Activated CD4-positive, alpha-beta T cell treated with anti-CD3 and anti-CD28 coated beads, Interleukin-2, amount 10 ng/mL, durations not matched to agents 24 days and 14 days (primary cell): ENCODE measurements at regions of chrX and their contacts with region 1.

Region 1: GRCh38 chrX:136028251-136028984 is 43.2 kb downstream of the SLC9A6 start:
- DNase-seq: peak; percentile 62
- H3K4me3 Mint-ChIP-seq: no peak overlapping the region
- H3K27ac Mint-ChIP-seq: no peak overlapping the region
- H3K4me1 Mint-ChIP-seq: no peaks in the 10 kb centered on the region
- H3K27me3 Mint-ChIP-seq: no peaks in the 10 kb centered on the region

Region 2: GRCh38 chrX:136162831-136163570 is 134.6 kb after region 1 on chrX:
- intact Hi-C with region 1: loop called (anchors 1 kb)
- DNase-seq: peak; percentile 82
- H3K4me3 Mint-ChIP-seq: no peak overlapping the region
- H3K27ac Mint-ChIP-seq: no peak overlapping the region
- H3K4me1 Mint-ChIP-seq: peaks cover 7% of the 10 kb centered on the region
- H3K27me3 Mint-ChIP-seq: no peaks in the 10 kb centered on the region

Region 3: DNA sequence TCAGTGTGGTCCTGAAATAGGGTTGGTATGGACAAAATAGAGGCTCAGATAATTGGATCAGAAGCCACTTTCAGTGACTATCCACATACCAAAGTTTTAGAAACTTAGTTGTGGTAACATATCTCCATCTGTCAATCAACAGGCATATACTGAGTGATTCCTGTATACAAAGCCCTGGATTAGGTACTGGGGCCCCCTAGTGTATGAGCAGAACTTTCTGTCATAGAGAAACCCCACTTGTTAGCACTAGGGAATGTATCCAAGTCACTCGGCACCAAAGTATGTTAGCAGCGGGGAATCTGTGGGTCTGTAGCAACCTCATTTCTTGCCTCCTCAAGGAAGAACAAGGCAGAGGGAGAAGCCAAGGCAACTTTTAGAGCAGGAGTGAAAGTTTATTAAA is 172.0 kb after region 1 on chrX:
- intact Hi-C with region 1: loop called (anchors 5 kb)
- DNase-seq: peak; percentile 69
- H3K4me3 Mint-ChIP-seq: no peak overlapping the region
- H3K27ac Mint-ChIP-seq: no peak overlapping the region
- H3K4me1 Mint-ChIP-seq: peaks cover 30% of the 10 kb centered on the region
- H3K27me3 Mint-ChIP-seq: no peaks in the 10 kb centered on the region